ENCODE measurements at regions of chr7 and their contacts with region 1.

Region 1: GRCh38 chr7:26853788-26854393 is 10.5 kb downstream of the SKAP2 start:
- DNase-seq: peak; percentile 63

Region 2: GRCh38 chr7:27134392-27134791 is 280.5 kb after region 1 on chr7:
- in situ Hi-C with region 1: no loop called
- DNase-seq: peak; percentile 24

Region 3: DNA sequence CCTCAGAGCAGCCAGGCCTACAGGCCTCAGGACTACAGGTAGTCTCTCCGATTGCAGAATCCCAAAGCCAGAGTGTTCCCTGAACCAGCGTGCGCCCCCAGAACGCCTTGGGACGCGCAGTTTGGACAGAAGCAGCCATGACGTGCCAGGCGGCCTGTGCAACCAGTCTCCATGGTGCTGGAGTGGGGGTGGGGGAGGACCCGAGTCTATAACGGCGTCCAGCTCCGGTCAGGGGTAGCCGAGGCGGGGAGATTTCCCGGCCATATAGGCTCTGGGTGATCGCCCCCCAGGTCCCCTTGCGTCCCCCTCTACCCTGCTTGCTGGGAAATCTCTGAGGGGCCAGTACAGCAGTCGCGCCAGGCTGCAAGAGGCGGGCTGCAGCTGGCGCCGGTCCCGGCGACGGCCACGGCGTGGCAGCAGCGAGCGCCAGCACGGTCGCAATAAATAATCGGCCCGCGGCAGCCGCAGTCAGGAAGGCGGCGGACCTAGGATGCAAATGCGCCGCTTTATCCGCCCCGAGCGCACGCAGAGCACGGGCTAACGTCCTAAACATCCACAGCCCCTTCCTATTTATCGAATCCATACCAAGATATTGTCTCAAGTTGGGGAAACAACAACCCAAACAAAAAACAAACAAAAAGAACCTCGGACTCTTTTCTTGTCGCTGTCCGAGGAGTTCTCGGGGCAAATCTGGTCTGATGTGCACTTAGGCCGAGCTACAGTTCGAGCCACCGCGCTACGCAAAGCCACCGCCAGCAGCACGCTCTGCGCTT is 296.9 kb after region 1 on chr7:
- in situ Hi-C with region 1: loop called (anchors 10 kb)
- DNase-seq: peak; percentile 92